Heart left ventricle (tissue), 16 donors: ENCODE measurements at regions of chr1 and their contacts with region 1.

Region 1: DNA sequence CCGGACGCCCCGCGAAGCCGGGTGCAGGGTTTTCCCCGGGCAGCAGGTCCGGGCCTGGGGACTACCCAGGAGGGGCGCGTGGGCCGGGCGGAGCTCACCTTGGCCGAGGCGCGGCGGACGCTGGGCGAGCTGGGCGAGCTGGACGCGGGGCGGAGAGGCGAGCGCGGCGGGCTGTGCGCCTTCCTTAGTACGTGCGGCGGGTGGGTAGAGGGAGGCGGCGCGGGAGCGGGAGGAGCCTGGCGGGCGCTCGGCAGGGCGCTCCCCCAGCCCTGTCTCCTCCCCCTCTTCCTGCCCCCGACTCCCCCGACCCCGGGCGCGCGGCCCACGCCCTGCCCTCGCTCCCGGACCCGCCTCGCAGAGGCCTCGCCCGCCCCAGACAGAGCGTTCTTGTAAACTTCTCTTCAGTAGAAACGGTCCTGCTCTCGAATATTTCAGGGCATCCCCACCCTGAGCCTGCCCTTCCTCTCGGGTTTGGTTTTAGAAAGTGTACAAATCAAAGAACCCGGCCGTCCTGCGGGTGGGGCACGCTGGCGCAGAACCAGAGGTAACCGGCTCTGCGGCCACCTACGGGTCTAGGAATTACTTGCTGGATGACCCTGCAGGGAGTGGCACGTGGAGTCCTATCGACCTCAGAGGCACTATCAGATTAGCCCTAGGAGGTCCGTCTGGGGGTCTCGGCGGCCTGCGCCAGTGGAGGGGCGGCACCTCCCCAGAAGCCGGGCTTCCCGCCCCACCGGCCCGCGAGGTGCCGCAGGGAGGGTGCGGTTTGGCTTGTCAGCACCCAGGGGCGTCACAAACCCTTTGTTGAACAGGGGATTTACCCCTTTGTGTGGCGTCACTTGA is at the start of gene S100A10:
- DNase-seq: peak; percentile 85 to 92 (median 88)
- ATAC-seq: peak; percentile 71 to 89 (median 85)
- H3K4me3 ChIP-seq: peak within 1 kb of the TSS; percentile 70 to 97 (median 86)
- H3K27ac ChIP-seq: peak within 1 kb of the TSS; percentile 87 to 97 (median 92)
- H3K4me1 ChIP-seq: peaks cover 8 to 57% (median 42%) of the 10 kb centered on the region in 12 donors
- H3K27me3 ChIP-seq: no peaks in the 10 kb centered on the region
- CTCF ChIP-seq: no peak
- POLR2A ChIP-seq: peak in 1 of 2 donors; percentile 77
- total RNA-seq, gene S100A10: 55.5 to 403 (median 156) TPM

Region 2: DNA sequence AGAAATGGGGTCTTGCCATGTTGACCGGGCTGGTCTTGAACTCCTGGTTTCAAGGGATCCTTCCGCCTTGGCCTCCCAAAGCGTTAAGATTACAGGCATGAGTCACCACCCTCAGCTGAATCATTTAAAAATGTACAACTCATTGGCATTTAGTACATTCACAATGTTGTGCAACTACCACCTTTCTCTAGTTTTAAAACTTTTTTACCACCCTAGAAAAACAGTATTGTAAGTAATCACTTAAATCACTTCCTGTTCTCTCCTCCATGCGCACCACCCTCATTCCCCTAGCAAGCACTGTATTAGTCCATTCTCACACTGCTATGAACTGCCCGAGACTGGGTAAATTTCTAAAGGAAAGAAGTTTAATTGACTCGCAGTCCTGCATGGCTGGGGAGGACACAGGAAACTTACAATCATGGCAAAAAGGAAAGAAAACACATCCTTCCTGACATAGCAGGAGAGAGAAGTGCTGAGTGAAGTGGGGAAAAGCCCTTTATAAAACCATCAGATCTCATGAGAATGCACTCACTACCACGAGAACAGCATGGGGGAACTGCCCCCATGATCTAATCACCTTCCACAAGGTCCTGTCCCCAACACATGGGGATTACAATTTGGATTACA is 126.0 kb before region 1 on chr1:
- intact Hi-C with region 1: no loop called
- DNase-seq: no peak
- ATAC-seq: peak in 1 of 4 donors; percentile 34
- H3K4me3 ChIP-seq: no peak overlapping the region
- H3K27ac ChIP-seq: no peak overlapping the region
- H3K4me1 ChIP-seq: peaks cover 0 to 17% (median 0%) of the 10 kb centered on the region in 12 donors
- H3K27me3 ChIP-seq: no peaks in the 10 kb centered on the region
- CTCF ChIP-seq: no peak
- POLR2A ChIP-seq: no peak

Region 3: GRCh38 chr1:151888972-151889570 is 104.8 kb before region 1 on chr1:
- intact Hi-C with region 1: loop called in 1 of 10 experiments (anchors 5 kb)
- DNase-seq: no peak
- ATAC-seq: no peak
- H3K4me3 ChIP-seq: no peak overlapping the region
- H3K27ac ChIP-seq: no peak overlapping the region
- H3K4me1 ChIP-seq: no peaks in the 10 kb centered on the region
- H3K27me3 ChIP-seq: no peaks in the 10 kb centered on the region
- CTCF ChIP-seq: peak in 10 of 12 donors; percentile 15 to 49 (median 35)
- POLR2A ChIP-seq: no peak

Region 4: GRCh38 chr1:151934048-151934493 is 59.8 kb before region 1 on chr1:
- intact Hi-C with region 1: loop called in 8 of 10 experiments (anchors 1 to 2 kb)
- DNase-seq: peak in 2 of 5 donors; percentile 30 to 48
- ATAC-seq: peak; percentile 71 to 91 (median 86)
- H3K4me3 ChIP-seq: no peak overlapping the region
- H3K27ac ChIP-seq: no peak overlapping the region
- H3K4me1 ChIP-seq: no peaks in the 10 kb centered on the region
- H3K27me3 ChIP-seq: no peaks in the 10 kb centered on the region
- CTCF ChIP-seq: peak; percentile 73 to 95 (median 86)
- POLR2A ChIP-seq: no peak

Region 5: DNA sequence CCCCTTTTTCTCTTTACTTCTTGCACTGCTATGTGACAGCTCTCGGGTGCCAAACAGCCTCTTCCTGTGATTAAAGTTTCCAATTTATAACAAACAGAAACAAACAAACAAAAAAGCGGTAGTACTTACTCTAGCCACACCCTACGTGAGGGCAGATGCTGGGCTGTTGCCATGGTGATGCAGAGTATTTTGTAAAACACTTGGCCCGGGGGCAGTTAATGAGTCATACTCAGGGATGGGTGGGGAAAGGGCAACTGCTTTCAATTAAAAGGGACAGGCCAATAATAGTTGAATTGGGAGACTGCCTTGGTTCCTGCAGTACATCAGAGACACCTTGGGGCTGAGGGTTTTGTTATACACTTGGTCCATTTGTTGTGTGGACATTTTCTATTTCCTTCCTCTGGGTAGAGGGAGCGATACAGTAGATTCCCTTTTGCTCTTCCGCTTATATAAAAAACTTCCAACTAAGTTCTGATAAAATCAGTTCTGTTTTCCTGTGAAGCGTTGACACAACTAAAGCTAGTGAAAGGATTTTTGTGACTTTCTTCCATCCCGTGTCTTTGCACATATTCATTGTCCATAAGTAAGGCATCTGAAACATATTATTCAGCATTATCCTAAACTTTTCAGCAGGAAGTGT is 48.0 kb before region 1 on chr1:
- intact Hi-C with region 1: loop called in 2 of 10 experiments (anchors 5 kb)
- DNase-seq: peak; percentile 82 to 94 (median 86)
- ATAC-seq: peak; percentile 70 to 88 (median 78)
- H3K4me3 ChIP-seq: peak overlapping the region in 3 of 12 donors; percentile 8 to 23 (median 16)
- H3K27ac ChIP-seq: peak overlapping the region; percentile 54 to 89 (median 82)
- H3K4me1 ChIP-seq: peaks cover 8 to 61% (median 43%) of the 10 kb centered on the region in 12 donors
- H3K27me3 ChIP-seq: no peaks in the 10 kb centered on the region
- CTCF ChIP-seq: no peak
- POLR2A ChIP-seq: peak in 1 of 2 donors; percentile 41

Region 6: DNA sequence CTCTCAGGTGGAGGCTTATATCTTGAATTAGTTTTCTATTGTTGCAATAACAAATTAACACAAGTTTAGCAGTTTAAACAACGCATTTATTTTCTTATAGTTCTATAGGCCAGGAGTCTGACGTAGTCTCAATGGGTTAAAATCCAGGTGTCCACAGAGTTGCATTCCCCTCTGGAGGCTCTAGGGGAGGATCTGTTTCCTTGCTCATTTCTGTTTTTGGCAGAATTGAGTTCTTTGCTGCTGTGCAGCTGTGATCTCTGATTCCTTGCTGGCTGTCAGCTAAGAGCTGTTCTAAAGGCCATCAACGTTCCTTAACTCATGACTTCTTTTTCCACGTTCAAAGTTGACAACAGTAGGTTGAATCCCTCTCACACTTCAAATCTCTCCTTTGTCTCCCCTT is 32.0 kb before region 1 on chr1:
- intact Hi-C with region 1: loop called in 2 of 10 experiments (anchors 2 to 5 kb)
- DNase-seq: no peak
- ATAC-seq: peak in 1 of 4 donors; percentile 37
- H3K4me3 ChIP-seq: no peak overlapping the region
- H3K27ac ChIP-seq: peak overlapping the region in 1 of 12 donors; percentile 49
- H3K4me1 ChIP-seq: peaks cover 0 to 26% (median 17%) of the 10 kb centered on the region in 12 donors
- H3K27me3 ChIP-seq: no peaks in the 10 kb centered on the region
- CTCF ChIP-seq: no peak
- POLR2A ChIP-seq: no peak

Region 7: GRCh38 chr1:151968058-151968457 is 25.8 kb before region 1 on chr1:
- intact Hi-C with region 1: loop called in 6 of 10 experiments (anchors 1 to 5 kb)
- DNase-seq: peak in 2 of 5 donors; percentile 25 to 37
- ATAC-seq: peak in 3 of 4 donors; percentile 72 to 79 (median 77)
- H3K4me3 ChIP-seq: no peak overlapping the region
- H3K27ac ChIP-seq: no peak overlapping the region
- H3K4me1 ChIP-seq: peaks cover 0 to 35% (median 12%) of the 10 kb centered on the region in 12 donors
- H3K27me3 ChIP-seq: no peaks in the 10 kb centered on the region
- CTCF ChIP-seq: peak; percentile 56 to 75 (median 68)
- POLR2A ChIP-seq: no peak